ENCODE measurements at regions of chr14 and their contacts with region 1.

Region 1: GRCh38 chr14:21978184-21978998 is 304.8 kb upstream of the OR4E1 start:
- DNase-seq: peak; percentile 41
- H3K4me3 ChIP-seq: no peak overlapping the region
- H3K27ac ChIP-seq: no peak overlapping the region
- H3K4me1 ChIP-seq: no peaks in the 10 kb centered on the region
- H3K27me3 ChIP-seq: peaks cover 7 to 10% of the 10 kb centered on the region in 2 experiments
- CTCF ChIP-seq: peak; percentile 78 to 87
- POLR2A ChIP-seq: no peak

Region 2: DNA sequence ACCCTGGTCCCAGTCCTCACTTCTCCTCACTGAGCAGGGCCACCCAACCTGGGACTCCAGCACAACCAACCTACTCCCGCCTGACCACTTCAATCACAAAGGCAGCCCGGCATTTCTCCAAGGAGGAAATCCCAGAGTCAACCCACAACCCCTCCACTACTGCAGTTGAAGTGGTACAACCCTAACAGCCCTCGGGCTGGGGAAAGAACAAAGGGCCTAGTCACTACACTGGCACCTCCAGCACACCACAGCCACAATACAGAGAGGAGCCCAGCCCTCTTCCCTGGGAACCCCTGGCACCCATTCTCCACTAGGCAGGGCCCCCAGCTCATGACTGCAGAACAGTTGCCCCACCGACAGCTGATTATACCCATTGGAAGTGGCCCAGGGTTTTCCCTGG is 808.8 kb before region 1 on chr14:
- CTCF ChIA-PET with region 1: no interaction called
- POLR2A ChIA-PET with region 1: no interaction called
- dilution Hi-C with region 1: no loop called
- intact Hi-C with region 1: no loop called
- DNase-seq: no peak
- H3K4me3 ChIP-seq: no peak overlapping the region
- H3K27ac ChIP-seq: no peak overlapping the region
- H3K4me1 ChIP-seq: no peaks in the 10 kb centered on the region
- H3K27me3 ChIP-seq: peaks cover 24 to 25% of the 10 kb centered on the region in 2 experiments
- CTCF ChIP-seq: no peak
- POLR2A ChIP-seq: no peak

Region 3: GRCh38 chr14:21852061-21852664 is 126.2 kb before region 1 on chr14:
- CTCF ChIA-PET with region 1: interaction called, 16 read pairs
- POLR2A ChIA-PET with region 1: no interaction called
- dilution Hi-C with region 1: no loop called
- intact Hi-C with region 1: no loop called
- DNase-seq: peak; percentile 58
- H3K4me3 ChIP-seq: no peak overlapping the region
- H3K27ac ChIP-seq: no peak overlapping the region
- H3K4me1 ChIP-seq: no peaks in the 10 kb centered on the region
- H3K27me3 ChIP-seq: peaks cover 20 to 37% of the 10 kb centered on the region in 2 experiments
- CTCF ChIP-seq: peak; percentile 76 to 86
- POLR2A ChIP-seq: no peak

Region 4: GRCh38 chr14:21902650-21903103 is 75.7 kb before region 1 on chr14:
- CTCF ChIA-PET with region 1: interaction called, 14 read pairs
- POLR2A ChIA-PET with region 1: no interaction called
- dilution Hi-C with region 1: no loop called
- intact Hi-C with region 1: no loop called
- DNase-seq: peak; percentile 21
- H3K4me3 ChIP-seq: no peak overlapping the region
- H3K27ac ChIP-seq: no peak overlapping the region
- H3K4me1 ChIP-seq: peaks cover 5% of the 10 kb centered on the region
- H3K27me3 ChIP-seq: no peaks in the 10 kb centered on the region
- CTCF ChIP-seq: peak; percentile 29 to 49
- POLR2A ChIP-seq: no peak

Region 5: GRCh38 chr14:21940887-21941856 is 37.2 kb before region 1 on chr14:
- CTCF ChIA-PET with region 1: interaction called, 27 read pairs
- POLR2A ChIA-PET with region 1: no interaction called
- dilution Hi-C with region 1: no loop called
- intact Hi-C with region 1: no loop called
- DNase-seq: peak; percentile 27
- H3K4me3 ChIP-seq: no peak overlapping the region
- H3K27ac ChIP-seq: no peak overlapping the region
- H3K4me1 ChIP-seq: peaks cover 14% of the 10 kb centered on the region
- H3K27me3 ChIP-seq: no peaks in the 10 kb centered on the region
- CTCF ChIP-seq: peak; percentile 44 to 51
- POLR2A ChIP-seq: no peak

Region 6: DNA sequence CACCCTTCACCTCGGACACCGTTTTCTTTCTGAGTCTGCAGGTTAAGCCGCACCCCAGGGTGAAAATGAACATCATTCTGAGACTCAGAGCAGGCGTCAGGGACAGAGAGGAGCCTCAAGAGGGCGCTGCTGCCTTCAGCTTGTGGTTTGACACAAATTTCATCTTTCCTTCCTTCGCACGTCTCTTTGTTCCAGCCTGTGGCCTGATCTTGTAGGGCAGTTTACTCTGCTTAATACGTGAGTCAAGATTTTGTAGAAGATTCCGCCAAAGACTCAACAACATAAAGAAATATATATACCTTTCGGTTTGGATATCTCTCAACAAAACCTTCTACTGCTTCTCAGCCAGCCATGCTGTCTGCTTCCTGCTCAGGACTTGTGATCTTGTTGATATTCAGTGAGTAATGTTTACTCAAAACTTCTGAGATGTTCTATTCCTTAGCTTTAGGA is 24.5 kb after region 1 on chr14:
- CTCF ChIA-PET with region 1: interaction called, 23 read pairs
- POLR2A ChIA-PET with region 1: no interaction called
- dilution Hi-C with region 1: no loop called
- intact Hi-C with region 1: no loop called
- DNase-seq: no peak
- H3K4me3 ChIP-seq: no peak overlapping the region
- H3K27ac ChIP-seq: no peak overlapping the region
- H3K4me1 ChIP-seq: no peaks in the 10 kb centered on the region
- H3K27me3 ChIP-seq: no peaks in the 10 kb centered on the region
- CTCF ChIP-seq: peak; percentile 45 to 48
- POLR2A ChIP-seq: no peak

Region 7: GRCh38 chr14:22039938-22040775 is 61.8 kb after region 1 on chr14:
- CTCF ChIA-PET with region 1: interaction called, 12 read pairs
- POLR2A ChIA-PET with region 1: no interaction called
- dilution Hi-C with region 1: no loop called
- intact Hi-C with region 1: no loop called
- DNase-seq: peak; percentile 32
- H3K4me3 ChIP-seq: no peak overlapping the region
- H3K27ac ChIP-seq: no peak overlapping the region
- H3K4me1 ChIP-seq: no peaks in the 10 kb centered on the region
- H3K27me3 ChIP-seq: peaks cover 4 to 5% of the 10 kb centered on the region in 2 experiments
- CTCF ChIP-seq: peak; percentile 51 to 60
- POLR2A ChIP-seq: no peak

Region 8: GRCh38 chr14:22829661-22830442 is 851.5 kb after region 1 on chr14 and contains the start of gene MRPL52:
- CTCF ChIA-PET with region 1: no interaction called
- POLR2A ChIA-PET with region 1: no interaction called
- dilution Hi-C with region 1: no loop called
- intact Hi-C with region 1: no loop called
- DNase-seq: peak; percentile 84
- H3K4me3 ChIP-seq: peak within 1 kb of the TSS; percentile 68 to 98 (median 97)
- H3K27ac ChIP-seq: peak within 1 kb of the TSS; percentile 92
- H3K4me1 ChIP-seq: peaks cover 27% of the 10 kb centered on the region
- H3K27me3 ChIP-seq: no peaks in the 10 kb centered on the region
- CTCF ChIP-seq: peak in 1 of 2 donors; percentile 4
- POLR2A ChIP-seq: peak; percentile 87
- total RNA-seq, gene MRPL52: 174 TPM in 2 replicates

Measured in endothelial cell of umbilical vein (primary cell).